Activated CD4-positive, alpha-beta T cell treated with anti-CD3 and anti-CD28 coated beads for 36 hours (primary cell): ENCODE measurements at regions of chr3 and their contacts with region 1.

Region 1: GRCh38 chr3:50611464-50612233 is at the start of gene CISH:
- DNase-seq: peak; percentile 99
- ATAC-seq: peak; percentile 68
- H3K4me3 Mint-ChIP-seq: peak within 1 kb of the TSS; percentile 96
- H3K27ac Mint-ChIP-seq: peak within 1 kb of the TSS; percentile 100
- H3K4me1 Mint-ChIP-seq: peaks cover 39% of the 10 kb centered on the region
- H3K27me3 Mint-ChIP-seq: no peaks in the 10 kb centered on the region
- total RNA-seq, gene CISH: 265 to 269 TPM

Region 2: DNA sequence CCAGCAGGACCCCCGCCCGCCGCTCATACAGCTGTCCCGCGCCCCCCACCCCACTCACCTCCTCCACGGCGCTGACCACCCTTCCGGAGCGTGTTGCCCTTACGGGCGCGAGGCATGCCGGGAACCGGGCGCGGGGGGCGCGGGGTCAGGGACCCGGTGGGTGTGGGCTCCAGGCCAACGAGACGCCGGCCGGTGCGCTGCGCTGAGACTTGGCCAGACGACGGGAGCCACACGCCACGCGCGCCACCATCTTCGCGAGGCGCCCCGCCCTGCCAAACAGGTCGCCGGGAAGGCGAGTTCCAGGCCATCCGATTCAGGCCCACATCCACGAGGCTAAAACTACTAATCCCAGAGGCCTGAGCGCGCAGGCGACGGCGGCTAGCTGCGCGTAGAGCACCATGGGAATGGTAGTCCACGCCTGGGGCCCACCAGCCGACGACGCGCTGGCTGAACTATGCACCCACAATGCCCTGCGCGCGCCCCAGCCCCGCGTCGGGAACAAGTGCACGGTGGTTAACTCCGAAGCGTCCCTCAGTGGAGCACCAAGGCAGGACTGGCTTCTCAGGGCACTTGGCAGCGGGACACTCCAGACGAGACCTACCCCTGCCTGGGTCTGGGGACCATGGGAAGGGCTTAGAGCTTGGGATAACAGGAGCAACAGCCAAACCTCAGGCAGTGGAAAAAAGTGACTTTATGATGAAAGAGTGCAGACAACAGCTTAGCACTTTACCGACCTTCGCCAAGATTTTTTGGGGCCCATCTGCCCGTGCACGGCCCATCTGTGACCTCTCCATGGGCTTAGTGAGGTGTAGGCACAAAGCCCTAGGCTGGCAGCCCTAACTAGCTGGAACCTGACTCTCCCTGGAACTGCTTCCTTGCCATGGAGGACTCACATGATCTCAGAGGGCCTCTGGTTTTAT is 319.2 kb before region 1 on chr3 and contains the start of gene IFRD2:
- CTCF ChIA-PET with region 1: no interaction called
- POLR2A ChIA-PET with region 1: no interaction called
- intact Hi-C with region 1: loop called in 1 of 2 experiments (anchors 2 kb)
- DNase-seq: peak; percentile 98
- ATAC-seq: peak; percentile 99
- H3K4me3 Mint-ChIP-seq: peak within 1 kb of the TSS; percentile 88
- H3K27ac Mint-ChIP-seq: peak within 1 kb of the TSS; percentile 99
- H3K4me1 Mint-ChIP-seq: peaks cover 16% of the 10 kb centered on the region
- H3K27me3 Mint-ChIP-seq: no peaks in the 10 kb centered on the region
- total RNA-seq, gene IFRD2: 100 to 125 TPM

Region 3: GRCh38 chr3:50365080-50365841 is 246.4 kb before region 1 on chr3:
- CTCF ChIA-PET with region 1: no interaction called
- POLR2A ChIA-PET with region 1: no interaction called
- intact Hi-C with region 1: loop called in 1 of 2 experiments (anchors 1 kb)
- DNase-seq: peak; percentile 98
- ATAC-seq: peak; percentile 99
- H3K4me3 Mint-ChIP-seq: peak overlapping the region; percentile 72
- H3K27ac Mint-ChIP-seq: peak overlapping the region; percentile 74
- H3K4me1 Mint-ChIP-seq: peaks cover 13% of the 10 kb centered on the region
- H3K27me3 Mint-ChIP-seq: no peaks in the 10 kb centered on the region

Region 4: DNA sequence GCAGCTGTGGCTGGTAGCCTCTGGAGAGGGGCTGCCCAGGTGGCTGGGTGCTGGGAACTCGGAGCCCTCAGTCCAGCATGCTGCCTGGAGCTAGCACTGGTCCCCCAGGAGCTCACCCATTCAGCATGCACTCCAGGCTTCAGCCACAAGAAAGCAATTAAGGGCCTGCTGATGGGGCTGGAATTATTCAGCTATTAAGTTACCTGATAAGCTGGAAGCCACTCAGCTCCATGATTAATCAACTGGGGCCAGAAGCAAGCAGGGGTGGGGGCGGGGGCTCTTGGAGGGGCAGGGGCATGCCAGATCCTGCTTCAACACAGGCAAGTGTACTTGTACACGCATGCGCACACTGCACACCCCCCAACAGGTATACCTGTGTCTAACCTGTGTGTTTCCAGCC is 230.3 kb before region 1 on chr3:
- CTCF ChIA-PET with region 1: no interaction called
- POLR2A ChIA-PET with region 1: no interaction called
- intact Hi-C with region 1: no loop called
- DNase-seq: no peak
- ATAC-seq: no peak
- H3K4me3 Mint-ChIP-seq: no peak overlapping the region
- H3K27ac Mint-ChIP-seq: no peak overlapping the region
- H3K4me1 Mint-ChIP-seq: no peaks in the 10 kb centered on the region
- H3K27me3 Mint-ChIP-seq: no peaks in the 10 kb centered on the region

Region 5: GRCh38 chr3:50568947-50569749 is 42.5 kb before region 1 on chr3 and contains the start of gene HEMK1:
- CTCF ChIA-PET with region 1: interaction called, 647 read pairs
- POLR2A ChIA-PET with region 1: interaction called, 267 read pairs
- intact Hi-C with region 1: loop called (anchors 1 kb)
- DNase-seq: peak; percentile 98
- ATAC-seq: peak; percentile 33
- H3K4me3 Mint-ChIP-seq: peak within 1 kb of the TSS; percentile 100
- H3K27ac Mint-ChIP-seq: peak within 1 kb of the TSS; percentile 99
- H3K4me1 Mint-ChIP-seq: peaks cover 59% of the 10 kb centered on the region
- H3K27me3 Mint-ChIP-seq: no peaks in the 10 kb centered on the region
- total RNA-seq, gene HEMK1: 61.6 to 77.7 TPM

Region 6: DNA sequence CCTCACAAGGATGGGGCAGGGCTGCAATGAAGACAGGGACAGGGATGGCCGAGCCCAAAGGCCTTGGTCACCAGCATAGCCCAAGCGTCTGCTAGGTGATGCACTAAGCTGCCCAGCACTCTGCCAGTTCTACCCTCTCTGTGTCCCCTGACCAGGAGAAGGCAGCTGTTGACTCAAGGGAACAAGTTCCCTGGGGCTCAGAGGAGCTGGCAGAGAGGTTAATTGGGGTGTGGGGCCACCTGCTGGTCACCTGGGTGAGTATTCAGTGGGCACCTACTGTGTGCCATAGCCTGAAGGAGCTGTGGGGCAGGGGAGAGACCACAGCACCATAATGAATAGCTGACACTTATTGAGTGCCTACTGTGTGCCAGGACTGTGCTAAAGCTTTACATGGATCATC is 41.1 kb after region 1 on chr3:
- CTCF ChIA-PET with region 1: interaction called, 78 read pairs
- POLR2A ChIA-PET with region 1: interaction called, 9 read pairs
- intact Hi-C with region 1: loop called (anchors 1 kb)
- DNase-seq: peak; percentile 80
- ATAC-seq: peak; percentile 51
- H3K4me3 Mint-ChIP-seq: no peak overlapping the region
- H3K27ac Mint-ChIP-seq: peak overlapping the region; percentile 7
- H3K4me1 Mint-ChIP-seq: peaks cover 25% of the 10 kb centered on the region
- H3K27me3 Mint-ChIP-seq: no peaks in the 10 kb centered on the region

Region 7: DNA sequence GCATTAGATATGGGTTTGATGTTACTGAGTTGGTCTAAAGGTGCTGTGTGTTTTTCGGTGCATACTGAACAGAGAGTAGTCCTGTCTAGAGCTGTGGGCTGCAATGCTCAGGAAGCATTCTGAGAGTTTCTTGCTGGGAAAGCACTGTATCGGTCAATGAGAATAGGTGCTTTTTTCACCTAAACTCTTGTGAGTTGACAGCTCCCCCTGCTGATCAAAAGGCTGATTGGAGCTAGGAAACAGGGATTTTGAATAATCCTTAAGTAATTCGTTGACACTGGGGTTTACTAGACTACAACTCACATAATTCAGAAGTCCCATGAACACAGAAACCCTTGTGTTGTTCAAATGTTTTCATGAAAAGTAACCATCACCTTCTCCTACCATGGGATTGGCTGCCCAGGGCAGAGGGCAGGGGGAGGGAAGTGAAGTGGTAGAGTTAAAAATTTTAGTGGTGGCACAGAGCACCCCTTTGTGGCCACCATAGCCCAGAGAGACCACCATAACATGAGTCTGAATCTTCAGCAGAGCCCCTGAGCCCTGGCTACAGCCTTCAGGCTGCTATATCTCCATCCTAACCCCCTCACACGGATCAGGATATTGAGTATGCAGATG is 760.4 kb after region 1 on chr3:
- CTCF ChIA-PET with region 1: interaction called, 10 read pairs
- POLR2A ChIA-PET with region 1: no interaction called
- intact Hi-C with region 1: loop called (anchors 1 kb)
- DNase-seq: peak; percentile 72
- ATAC-seq: peak; percentile 74
- H3K4me3 Mint-ChIP-seq: no peak overlapping the region
- H3K27ac Mint-ChIP-seq: no peak overlapping the region
- H3K4me1 Mint-ChIP-seq: no peaks in the 10 kb centered on the region
- H3K27me3 Mint-ChIP-seq: peaks cover 3% of the 10 kb centered on the region

Region 8: GRCh38 chr3:51670823-51671733 is 1059.4 kb after region 1 on chr3 and contains the start of gene TEX264:
- CTCF ChIA-PET with region 1: no interaction called
- POLR2A ChIA-PET with region 1: no interaction called
- intact Hi-C with region 1: loop called in 1 of 2 experiments (anchors 2 kb)
- DNase-seq: peak; percentile 94
- ATAC-seq: peak; percentile 66
- H3K4me3 Mint-ChIP-seq: peak within 1 kb of the TSS; percentile 79
- H3K27ac Mint-ChIP-seq: peak within 1 kb of the TSS; percentile 74
- H3K4me1 Mint-ChIP-seq: peaks cover 56% of the 10 kb centered on the region
- H3K27me3 Mint-ChIP-seq: no peaks in the 10 kb centered on the region
- total RNA-seq, gene TEX264: 35.3 to 37.4 TPM